ENCODE measurements at regions of chr7 and their contacts with region 1.

Region 1: GRCh38 chr7:31134246-31135188 is 82.4 kb downstream of the ADCYAP1R1 start:
- DNase-seq: peak; percentile 69 to 82 (median 74)
- ATAC-seq: peak; percentile 99
- H3K4me3 ChIP-seq: no peak overlapping the region
- H3K27ac ChIP-seq: no peak overlapping the region
- H3K4me1 ChIP-seq: no peaks in the 10 kb centered on the region
- H3K27me3 ChIP-seq: peaks cover 0 to 4% of the 10 kb centered on the region in 2 experiments; a peak in 3 of 5 replicates
- CTCF ChIP-seq: peak; percentile 69 to 80 (median 78)
- EP300 ChIP-seq: no peak
- POLR2A ChIP-seq: no peak
- RAD21 ChIP-seq: peak; percentile 51 to 76

Region 2: DNA sequence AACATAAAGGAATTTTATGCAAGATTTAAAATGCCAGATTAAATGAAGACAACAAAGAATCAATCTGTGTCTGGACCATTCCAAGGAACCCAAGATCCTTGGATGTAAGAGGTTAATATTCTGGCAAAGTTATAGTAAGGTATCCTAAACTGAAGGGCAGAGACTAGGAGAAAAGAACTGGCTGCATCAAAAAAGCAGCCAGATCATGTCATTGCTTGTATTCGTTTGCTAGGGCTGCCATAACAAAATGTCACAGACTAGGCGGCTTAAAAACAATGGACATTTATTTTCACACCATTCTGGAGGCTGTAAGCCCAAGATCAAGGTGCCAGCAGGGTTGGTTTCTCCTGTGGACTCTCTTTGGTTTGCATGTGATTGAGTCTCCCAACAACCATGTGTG is 17.3 kb after region 1 on chr7:
- CTCF ChIA-PET with region 1: no interaction called
- POLR2A ChIA-PET with region 1: no interaction called
- in situ Hi-C with region 1: no loop called
- intact Hi-C with region 1: no loop called
- DNase-seq: no peak
- ATAC-seq: no peak
- H3K4me3 ChIP-seq: no peak overlapping the region
- H3K27ac ChIP-seq: no peak overlapping the region
- H3K4me1 ChIP-seq: no peaks in the 10 kb centered on the region
- H3K27me3 ChIP-seq: no peaks in the 10 kb centered on the region
- CTCF ChIP-seq: no peak
- EP300 ChIP-seq: no peak
- POLR2A ChIP-seq: no peak
- RAD21 ChIP-seq: no peak

Region 3: DNA sequence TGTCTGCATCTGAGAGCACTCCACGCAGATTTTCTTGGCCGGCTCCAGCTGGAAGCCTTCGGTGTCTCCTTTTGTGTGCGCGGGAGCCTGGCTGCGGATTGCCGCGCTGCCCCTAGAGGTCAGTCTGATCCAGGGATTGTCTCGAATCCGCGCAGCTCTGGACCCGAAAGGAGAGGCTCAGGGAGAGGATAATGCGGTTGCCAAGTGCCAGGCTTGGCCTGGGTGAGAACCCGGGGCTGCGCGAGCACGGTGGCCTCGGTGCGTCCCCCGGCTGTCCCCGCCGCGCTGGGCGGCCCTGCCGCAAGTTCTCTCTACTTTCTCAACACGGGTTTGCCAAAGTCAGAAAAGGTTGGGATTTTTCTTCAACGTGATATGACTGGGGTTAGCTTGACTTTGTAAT is 58.5 kb after region 1 on chr7:
- CTCF ChIA-PET with region 1: no interaction called
- POLR2A ChIA-PET with region 1: no interaction called
- in situ Hi-C with region 1: no loop called
- intact Hi-C with region 1: loop called (anchors 5 kb)
- DNase-seq: peak; percentile 53 to 63 (median 59)
- ATAC-seq: peak; percentile 100
- H3K4me3 ChIP-seq: no peak overlapping the region
- H3K27ac ChIP-seq: no peak overlapping the region
- H3K4me1 ChIP-seq: peaks cover 0 to 4% of the 10 kb centered on the region in 2 experiments; a peak in 1 of 5 replicates
- H3K27me3 ChIP-seq: no peaks in the 10 kb centered on the region
- CTCF ChIP-seq: peak; percentile 77 to 81 (median 81)
- EP300 ChIP-seq: no peak
- POLR2A ChIP-seq: no peak
- RAD21 ChIP-seq: peak; percentile 18 to 67; a peak in 3 of 4 replicates

Measured in K562 (cell line).